ENCODE measurements at regions of chr15 and their contacts with region 1.

Region 1: DNA sequence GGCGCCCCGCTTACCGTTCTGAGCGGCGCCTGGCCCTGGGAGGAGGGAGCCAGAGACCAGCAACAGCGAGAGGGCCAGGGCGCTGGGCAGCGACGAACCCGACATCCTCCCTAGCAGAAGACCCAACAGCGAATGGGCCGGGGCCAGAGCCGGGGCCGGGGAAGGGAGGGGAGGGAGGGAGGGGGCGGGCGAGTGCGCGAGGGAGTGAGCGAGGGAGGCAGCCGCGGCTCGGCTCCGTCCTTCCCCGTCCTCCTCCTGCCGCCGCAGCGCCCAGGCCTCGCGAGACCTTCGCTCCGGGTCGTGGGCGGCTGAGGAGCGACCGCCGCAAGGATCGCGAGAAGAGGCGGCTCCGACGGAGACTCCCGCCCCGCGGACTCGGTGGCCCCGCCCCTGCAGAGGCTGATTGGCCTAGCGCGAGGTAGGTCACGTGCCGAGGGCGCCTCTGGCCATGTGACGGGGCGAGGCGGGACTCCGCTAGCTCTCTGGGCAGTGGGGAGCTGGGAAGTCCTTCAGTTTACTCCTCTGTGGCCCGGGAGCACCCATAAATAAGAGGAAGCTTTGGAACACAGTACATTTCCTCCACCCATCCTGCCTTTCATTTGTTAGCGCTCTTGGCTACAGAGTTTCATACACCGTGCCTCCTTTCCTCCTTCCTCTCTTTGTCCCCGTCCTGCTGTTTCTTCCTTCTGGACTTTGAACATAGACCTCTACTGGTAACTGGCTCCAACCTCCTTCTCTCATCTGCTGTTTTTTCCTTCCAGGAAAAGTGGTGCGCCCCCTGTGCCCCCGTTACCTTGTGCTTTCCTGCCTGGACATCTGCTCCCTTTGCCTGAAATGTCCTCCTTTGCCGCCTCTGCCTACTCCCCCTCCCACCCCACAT is at the start of gene NPTN:
- DNase-seq: peak; percentile 96 to 99 (median 97)
- ATAC-seq: peak; percentile 90
- H3K4me3 ChIP-seq: peak within 1 kb of the TSS; percentile 51 to 74
- H3K4me3 Mint-ChIP-seq: peak within 1 kb of the TSS; percentile 82
- H3K27ac ChIP-seq: peak within 1 kb of the TSS; percentile 25 to 78
- H3K27ac Mint-ChIP-seq: peak within 1 kb of the TSS; percentile 81
- H3K4me1 ChIP-seq: peaks cover 33% of the 10 kb centered on the region
- H3K4me1 Mint-ChIP-seq: peaks cover 45% of the 10 kb centered on the region
- H3K27me3 ChIP-seq: no peaks in the 10 kb centered on the region
- H3K27me3 Mint-ChIP-seq: peaks cover 8% of the 10 kb centered on the region
- CTCF ChIP-seq: no peak
- total RNA-seq, gene NPTN: 12.5 to 18.2 TPM

Region 2: DNA sequence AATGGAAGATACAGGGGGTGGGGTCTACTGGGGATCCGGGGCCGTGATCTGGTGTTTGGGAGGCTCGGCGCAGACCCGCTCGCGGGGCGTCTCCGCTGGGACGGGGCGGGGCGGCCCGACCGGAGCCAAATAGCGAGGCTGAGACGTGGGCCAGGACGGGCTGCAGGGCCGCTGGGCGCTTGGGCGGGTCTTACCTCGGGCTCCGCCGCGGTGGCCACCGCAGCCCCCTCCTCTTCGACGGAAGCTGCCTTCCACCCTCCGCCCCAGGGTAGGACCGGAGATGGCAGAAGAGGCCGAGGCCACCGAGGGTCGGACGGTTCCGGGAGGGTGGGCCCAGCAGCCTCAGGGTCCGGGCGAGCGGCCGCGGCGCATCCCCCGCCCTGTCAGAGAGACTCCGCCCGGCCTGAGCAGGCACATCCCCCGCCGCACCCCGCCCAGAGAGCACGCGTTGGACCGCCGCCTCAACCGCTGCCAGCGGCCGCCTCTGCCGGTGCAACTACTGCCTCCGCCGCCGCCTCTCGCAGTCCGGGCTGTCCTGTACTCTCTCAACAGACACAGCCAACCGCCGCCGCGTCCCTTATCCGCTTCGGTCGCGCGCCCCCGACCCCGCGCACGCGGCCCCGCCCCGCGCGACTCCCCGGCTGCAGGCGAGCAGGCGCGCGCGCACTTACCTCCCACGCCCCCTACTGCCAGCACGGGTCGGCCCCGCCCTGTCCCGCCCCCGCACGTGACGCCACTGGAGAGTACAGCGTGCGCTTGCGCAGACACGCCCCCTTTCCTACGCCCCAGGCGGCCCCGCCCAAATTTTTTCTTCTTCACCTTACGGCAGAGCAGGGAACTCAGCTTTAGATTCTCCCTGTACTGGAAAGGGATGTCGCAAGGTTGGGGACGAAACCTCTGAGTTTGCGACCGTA is 1515.6 kb before region 1 on chr15 and contains the start of gene MYO9A:
- CTCF ChIA-PET with region 1: no interaction called
- POLR2A ChIA-PET with region 1: no interaction called
- intact Hi-C with region 1: loop called (anchors 2 to 5 kb)
- DNase-seq: peak; percentile 97 to 100 (median 99)
- ATAC-seq: peak; percentile 80
- H3K4me3 ChIP-seq: peak within 1 kb of the TSS; percentile 78 to 93
- H3K4me3 Mint-ChIP-seq: peak within 1 kb of the TSS; percentile 99
- H3K27ac ChIP-seq: peak within 1 kb of the TSS; percentile 95 to 97
- H3K27ac Mint-ChIP-seq: peak within 1 kb of the TSS; percentile 99
- H3K4me1 ChIP-seq: peaks cover 18% of the 10 kb centered on the region
- H3K4me1 Mint-ChIP-seq: peaks cover 45% of the 10 kb centered on the region
- H3K27me3 ChIP-seq: no peaks in the 10 kb centered on the region
- H3K27me3 Mint-ChIP-seq: no peaks in the 10 kb centered on the region
- CTCF ChIP-seq: no peak
- total RNA-seq, gene MYO9A: 15.1 to 20.0 TPM

Region 3: GRCh38 chr15:72783563-72784237 is 849.7 kb before region 1 on chr15 and contains the start of gene ADPGK:
- CTCF ChIA-PET with region 1: no interaction called
- POLR2A ChIA-PET with region 1: no interaction called
- intact Hi-C with region 1: loop called (anchors 2 to 5 kb)
- DNase-seq: peak; percentile 92 to 99 (median 96)
- ATAC-seq: peak; percentile 80
- H3K4me3 ChIP-seq: peak within 1 kb of the TSS; percentile 90 to 91
- H3K4me3 Mint-ChIP-seq: peak within 1 kb of the TSS; percentile 96
- H3K27ac ChIP-seq: peak within 1 kb of the TSS; percentile 93 to 95
- H3K27ac Mint-ChIP-seq: peak within 1 kb of the TSS; percentile 97
- H3K4me1 ChIP-seq: peaks cover 43% of the 10 kb centered on the region
- H3K4me1 Mint-ChIP-seq: peaks cover 50% of the 10 kb centered on the region
- H3K27me3 ChIP-seq: no peaks in the 10 kb centered on the region
- H3K27me3 Mint-ChIP-seq: no peaks in the 10 kb centered on the region
- CTCF ChIP-seq: no peak
- total RNA-seq, gene ADPGK: 113 to 120 TPM

Region 4: GRCh38 chr15:72800833-72801480 is 832.4 kb before region 1 on chr15:
- CTCF ChIA-PET with region 1: no interaction called
- POLR2A ChIA-PET with region 1: no interaction called
- intact Hi-C with region 1: no loop called
- DNase-seq: no peak
- ATAC-seq: no peak
- H3K4me3 ChIP-seq: no peak overlapping the region
- H3K4me3 Mint-ChIP-seq: no peak overlapping the region
- H3K27ac ChIP-seq: no peak overlapping the region
- H3K27ac Mint-ChIP-seq: no peak overlapping the region
- H3K4me1 ChIP-seq: peaks cover 9% of the 10 kb centered on the region
- H3K4me1 Mint-ChIP-seq: peaks cover 10% of the 10 kb centered on the region
- H3K27me3 ChIP-seq: peaks cover 0 to 2% of the 10 kb centered on the region in 2 experiments
- H3K27me3 Mint-ChIP-seq: peaks cover 34% of the 10 kb centered on the region
- CTCF ChIP-seq: no peak

Region 5: DNA sequence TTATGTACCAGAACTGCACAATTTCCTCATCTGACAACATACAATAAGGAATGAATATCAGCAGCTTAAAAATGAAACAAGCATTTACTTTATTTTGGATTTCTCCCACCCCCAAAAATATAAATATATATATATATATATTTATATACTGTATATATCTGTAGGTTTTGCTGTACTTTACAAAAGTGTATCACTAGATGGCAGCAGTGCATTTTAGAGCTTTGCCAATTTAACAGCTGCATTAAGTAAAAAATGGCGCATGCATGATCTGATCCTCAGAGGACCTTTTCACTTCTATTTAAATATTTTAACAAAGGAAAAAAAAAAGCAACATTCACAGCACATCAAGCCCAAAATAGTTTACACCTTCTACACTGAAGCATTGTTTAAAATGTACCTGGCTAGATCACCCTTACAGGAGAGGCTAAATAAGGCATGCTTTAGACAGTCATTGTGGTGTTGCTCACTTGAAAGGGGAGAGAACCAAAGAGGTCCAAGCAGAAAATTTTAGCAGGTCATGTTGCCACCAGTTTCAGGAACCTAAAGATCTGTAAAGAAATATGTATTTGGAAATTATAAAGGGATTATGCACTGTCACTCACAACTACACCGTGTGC is 72.7 kb before region 1 on chr15:
- CTCF ChIA-PET with region 1: interaction called, 24 read pairs
- POLR2A ChIA-PET with region 1: no interaction called
- intact Hi-C with region 1: loop called in 1 of 2 experiments (anchors 1 kb)
- DNase-seq: peak in 2 of 9 experiments; percentile 56 to 66
- ATAC-seq: peak; percentile 52
- H3K4me3 ChIP-seq: no peak overlapping the region
- H3K4me3 Mint-ChIP-seq: no peak overlapping the region
- H3K27ac ChIP-seq: no peak overlapping the region
- H3K27ac Mint-ChIP-seq: no peak overlapping the region
- H3K4me1 ChIP-seq: no peaks in the 10 kb centered on the region
- H3K4me1 Mint-ChIP-seq: no peaks in the 10 kb centered on the region
- H3K27me3 ChIP-seq: no peaks in the 10 kb centered on the region
- H3K27me3 Mint-ChIP-seq: no peaks in the 10 kb centered on the region
- CTCF ChIP-seq: peak; percentile 48

Region 6: GRCh38 chr15:73617301-73617831 is 16.0 kb before region 1 on chr15:
- CTCF ChIA-PET with region 1: interaction called, 17 read pairs
- POLR2A ChIA-PET with region 1: interaction called, 4 read pairs
- intact Hi-C with region 1: no loop called
- DNase-seq: no peak
- ATAC-seq: no peak
- H3K4me3 ChIP-seq: no peak overlapping the region
- H3K4me3 Mint-ChIP-seq: no peak overlapping the region
- H3K27ac ChIP-seq: no peak overlapping the region
- H3K27ac Mint-ChIP-seq: no peak overlapping the region
- H3K4me1 ChIP-seq: peaks cover 3% of the 10 kb centered on the region
- H3K4me1 Mint-ChIP-seq: peaks cover 55% of the 10 kb centered on the region
- H3K27me3 ChIP-seq: no peaks in the 10 kb centered on the region
- H3K27me3 Mint-ChIP-seq: no peaks in the 10 kb centered on the region
- CTCF ChIP-seq: no peak

Region 7: GRCh38 chr15:73684581-73685455 is 51.5 kb after region 1 on chr15:
- CTCF ChIA-PET with region 1: no interaction called
- POLR2A ChIA-PET with region 1: no interaction called
- intact Hi-C with region 1: no loop called
- DNase-seq: no peak
- ATAC-seq: no peak
- H3K4me3 ChIP-seq: no peak overlapping the region
- H3K4me3 Mint-ChIP-seq: peak overlapping the region; percentile 45
- H3K27ac ChIP-seq: no peak overlapping the region
- H3K27ac Mint-ChIP-seq: no peak overlapping the region
- H3K4me1 ChIP-seq: peaks cover 13% of the 10 kb centered on the region
- H3K4me1 Mint-ChIP-seq: peaks cover 8% of the 10 kb centered on the region
- H3K27me3 ChIP-seq: peaks cover 21 to 24% of the 10 kb centered on the region in 2 experiments
- H3K27me3 Mint-ChIP-seq: peaks cover 61% of the 10 kb centered on the region
- CTCF ChIP-seq: no peak

Region 8: GRCh38 chr15:73704869-73705645 is 71.7 kb after region 1 on chr15:
- CTCF ChIA-PET with region 1: interaction called, 42 read pairs
- POLR2A ChIA-PET with region 1: no interaction called
- intact Hi-C with region 1: loop called (anchors 1 to 2 kb)
- DNase-seq: peak; percentile 37 to 74 (median 58)
- ATAC-seq: peak; percentile 83
- H3K4me3 ChIP-seq: no peak overlapping the region
- H3K4me3 Mint-ChIP-seq: no peak overlapping the region
- H3K27ac ChIP-seq: no peak overlapping the region
- H3K27ac Mint-ChIP-seq: no peak overlapping the region
- H3K4me1 ChIP-seq: no peaks in the 10 kb centered on the region
- H3K4me1 Mint-ChIP-seq: peaks cover 4% of the 10 kb centered on the region
- H3K27me3 ChIP-seq: no peaks in the 10 kb centered on the region
- H3K27me3 Mint-ChIP-seq: peaks cover 28% of the 10 kb centered on the region
- CTCF ChIP-seq: peak; percentile 66

Region 9: GRCh38 chr15:75023181-75023871 is 1390.0 kb after region 1 on chr15 and contains the start of gene PPCDC:
- CTCF ChIA-PET with region 1: no interaction called
- POLR2A ChIA-PET with region 1: no interaction called
- intact Hi-C with region 1: loop called in 1 of 2 experiments (anchors 10 kb)
- DNase-seq: peak; percentile 81 to 96 (median 93)
- ATAC-seq: peak; percentile 100
- H3K4me3 ChIP-seq: peak within 1 kb of the TSS; percentile 82 to 93
- H3K4me3 Mint-ChIP-seq: peak within 1 kb of the TSS; percentile 92
- H3K27ac ChIP-seq: peak within 1 kb of the TSS; percentile 76 to 77
- H3K27ac Mint-ChIP-seq: peak within 1 kb of the TSS; percentile 92
- H3K4me1 ChIP-seq: peaks cover 8% of the 10 kb centered on the region
- H3K4me1 Mint-ChIP-seq: peaks cover 14% of the 10 kb centered on the region
- H3K27me3 ChIP-seq: no peaks in the 10 kb centered on the region
- H3K27me3 Mint-ChIP-seq: no peaks in the 10 kb centered on the region
- CTCF ChIP-seq: no peak
- total RNA-seq, gene PPCDC: 6.0 to 6.5 TPM